Activated T-helper 1 cell treated with anti-CD3 and anti-CD28 coated beads, Interleukin-12 subunit alpha, Interleukin-12 subunit beta, Interleukin-2, Interleukin-4 antibody, amounts not matched to agents 30 ng/mL and 10 ng/mL and 1 ng/mL, durations not matched to agents 14 hours and 24 hours and 36 hours (primary cell): ENCODE measurements at regions of chr2 and their contacts with region 1.

Region 1: DNA sequence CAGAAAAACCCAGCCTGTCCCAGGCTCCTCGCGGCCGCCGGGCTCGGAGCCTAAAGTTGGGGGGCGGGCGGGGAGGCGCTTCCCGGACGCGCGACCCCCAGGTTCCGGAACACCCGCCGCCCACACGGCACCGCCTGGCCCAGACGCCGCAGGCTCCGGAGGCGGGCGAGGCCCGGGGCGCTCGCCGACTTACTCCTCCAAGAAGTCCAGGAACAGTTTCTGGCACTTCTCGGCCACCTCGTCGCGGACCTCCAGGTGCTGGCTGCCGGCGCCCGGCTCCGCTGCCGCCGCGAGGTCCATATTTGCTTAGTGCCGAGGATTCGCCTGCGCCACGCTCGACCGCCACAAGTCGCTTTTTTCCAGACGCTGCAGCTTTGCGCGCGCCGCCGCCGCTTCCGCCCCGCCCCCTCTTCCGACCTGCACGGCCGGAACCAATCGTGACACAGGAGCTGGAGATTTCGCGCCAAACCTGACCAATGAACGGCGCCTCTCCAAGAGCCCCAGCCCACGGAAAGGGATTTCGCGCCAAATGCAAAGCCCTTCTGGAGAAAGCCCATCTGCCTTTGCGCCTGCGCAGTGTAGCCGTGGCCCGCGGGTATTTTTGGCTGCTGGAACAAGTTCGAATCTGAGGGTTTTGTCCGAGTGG is at the start of gene MCM6:
- DNase-seq: peak; percentile 99
- H3K4me3 Mint-ChIP-seq: peak within 1 kb of the TSS; percentile 98
- H3K27ac Mint-ChIP-seq: peak within 1 kb of the TSS; percentile 99
- H3K4me1 Mint-ChIP-seq: peaks cover 45% of the 10 kb centered on the region
- H3K27me3 Mint-ChIP-seq: peaks cover 2% of the 10 kb centered on the region
- total RNA-seq, gene MCM6: 176 and 177 TPM in 2 replicates

Region 2: GRCh38 chr2:135741395-135742324 is 134.5 kb before region 1 on chr2 and contains the start of gene UBXN4:
- intact Hi-C with region 1: loop called (anchors 1 kb)
- DNase-seq: peak; percentile 89
- H3K4me3 Mint-ChIP-seq: peak within 1 kb of the TSS; percentile 99
- H3K27ac Mint-ChIP-seq: peak within 1 kb of the TSS; percentile 100
- H3K4me1 Mint-ChIP-seq: peaks cover 36% of the 10 kb centered on the region
- H3K27me3 Mint-ChIP-seq: no peaks in the 10 kb centered on the region
- total RNA-seq, gene UBXN4: 115 and 121 TPM in 2 replicates

Region 3: GRCh38 chr2:135863233-135863632 is 13.0 kb before region 1 on chr2:
- intact Hi-C with region 1: no loop called
- DNase-seq: no peak
- H3K4me3 Mint-ChIP-seq: no peak overlapping the region
- H3K27ac Mint-ChIP-seq: no peak overlapping the region
- H3K4me1 Mint-ChIP-seq: peaks cover 44% of the 10 kb centered on the region
- H3K27me3 Mint-ChIP-seq: no peaks in the 10 kb centered on the region

Region 4: DNA sequence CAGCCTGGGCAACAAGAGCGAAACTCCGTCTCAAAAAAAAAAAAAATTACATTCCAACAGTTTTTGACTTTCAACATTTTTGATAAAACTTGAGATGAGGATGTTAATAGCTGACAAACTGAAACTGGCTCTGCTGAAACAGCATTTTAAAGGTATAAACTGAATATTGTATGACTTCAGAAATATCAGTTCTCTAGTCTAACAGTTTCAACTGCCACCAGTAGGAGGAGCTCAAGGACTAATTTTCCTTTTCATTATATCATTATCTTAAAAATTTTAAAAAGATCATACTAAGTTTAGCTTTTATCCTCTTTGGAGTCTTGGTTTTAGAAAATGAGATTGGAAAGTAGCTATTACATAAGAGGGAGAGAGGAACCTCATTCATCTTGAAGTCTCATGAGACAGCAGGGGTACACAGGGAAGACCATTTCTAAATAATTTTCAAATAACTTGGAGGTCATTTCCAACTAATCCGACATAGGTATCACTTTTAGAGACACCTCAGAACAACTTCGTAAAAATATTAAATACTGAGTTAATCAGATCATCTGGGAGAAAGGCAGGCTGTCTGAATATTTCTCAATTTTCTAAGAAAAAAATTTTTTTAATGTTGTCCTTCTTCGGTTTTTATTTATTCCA is 37.7 kb after region 1 on chr2:
- intact Hi-C with region 1: loop called (anchors 5 kb)
- DNase-seq: no peak
- H3K4me3 Mint-ChIP-seq: no peak overlapping the region
- H3K27ac Mint-ChIP-seq: no peak overlapping the region
- H3K4me1 Mint-ChIP-seq: peaks cover 27% of the 10 kb centered on the region
- H3K27me3 Mint-ChIP-seq: no peaks in the 10 kb centered on the region

Region 5: GRCh38 chr2:136034629-136035028 is 158.4 kb after region 1 on chr2:
- intact Hi-C with region 1: no loop called
- DNase-seq: no peak
- H3K4me3 Mint-ChIP-seq: no peak overlapping the region
- H3K27ac Mint-ChIP-seq: no peak overlapping the region
- H3K4me1 Mint-ChIP-seq: peaks cover 6% of the 10 kb centered on the region
- H3K27me3 Mint-ChIP-seq: peaks cover 14% of the 10 kb centered on the region